Activated naive CD4-positive, alpha-beta T cell treated with anti-CD3 and anti-CD28 coated beads for 36 hours (primary cell): ENCODE measurements at regions of chr1 and their contacts with region 1.

Region 1: GRCh38 chr1:41751804-41752513 is 166.8 kb downstream of the HIVEP3 start:
- DNase-seq: no peak
- H3K4me3 Mint-ChIP-seq: no peak overlapping the region
- H3K27ac Mint-ChIP-seq: peak overlapping the region; percentile 98
- H3K4me1 Mint-ChIP-seq: peaks cover 75% of the 10 kb centered on the region
- H3K27me3 Mint-ChIP-seq: no peaks in the 10 kb centered on the region

Region 2: DNA sequence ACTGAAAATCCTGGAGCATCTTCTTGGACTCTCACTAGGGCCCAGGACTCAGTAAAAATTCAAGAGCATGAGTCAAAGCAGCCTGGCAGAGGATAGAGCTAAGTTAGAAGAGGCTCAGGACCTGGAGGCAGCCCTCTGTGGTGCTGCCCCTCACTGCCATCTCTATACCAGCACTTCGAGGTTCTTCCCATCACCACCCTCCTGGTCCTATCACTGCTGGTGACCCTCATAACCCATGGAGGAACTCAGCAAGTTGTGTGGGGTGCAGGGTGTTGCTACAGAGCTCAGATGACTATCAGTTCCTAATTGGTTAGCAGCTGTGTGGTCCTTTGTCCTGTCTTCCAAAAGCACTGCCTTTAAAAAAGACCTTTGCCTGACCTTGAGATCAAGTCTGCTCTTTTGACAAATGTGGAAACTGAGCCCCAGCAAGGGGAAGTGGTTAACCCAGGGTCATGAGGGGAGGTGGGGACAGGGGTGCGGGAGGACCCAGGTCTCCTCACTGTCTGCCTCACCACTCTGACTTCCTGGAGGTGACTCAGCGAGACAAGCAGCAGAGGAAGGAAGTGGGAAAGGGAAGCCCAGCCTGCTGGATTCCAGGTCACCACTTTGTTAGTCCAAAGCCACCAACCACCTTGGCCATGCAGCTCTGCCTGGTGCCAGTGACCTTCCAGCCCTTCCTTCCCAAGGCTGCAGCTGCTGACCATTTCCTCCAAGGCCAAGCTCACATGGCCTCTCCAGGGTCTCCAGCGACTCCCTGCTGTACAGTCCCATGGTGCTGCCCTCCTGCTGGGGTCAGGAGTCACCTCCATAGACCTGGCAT is 68.1 kb before region 1 on chr1:
- CTCF ChIA-PET with region 1: no interaction called
- intact Hi-C with region 1: loop called (anchors 1 kb)
- DNase-seq: peak; percentile 68
- H3K4me3 Mint-ChIP-seq: no peak overlapping the region
- H3K27ac Mint-ChIP-seq: peak overlapping the region; percentile 65
- H3K4me1 Mint-ChIP-seq: peaks cover 54% of the 10 kb centered on the region
- H3K27me3 Mint-ChIP-seq: no peaks in the 10 kb centered on the region

Region 3: GRCh38 chr1:41739061-41739955 is 12.7 kb before region 1 on chr1:
- CTCF ChIA-PET with region 1: interaction called, 19 read pairs
- intact Hi-C with region 1: loop called (anchors 1 kb)
- DNase-seq: peak; percentile 96
- H3K4me3 Mint-ChIP-seq: peak overlapping the region; percentile 73
- H3K27ac Mint-ChIP-seq: peak overlapping the region; percentile 98
- H3K4me1 Mint-ChIP-seq: peaks cover 93% of the 10 kb centered on the region
- H3K27me3 Mint-ChIP-seq: no peaks in the 10 kb centered on the region

Region 4: GRCh38 chr1:41806472-41807155 is 54.7 kb after region 1 on chr1:
- CTCF ChIA-PET with region 1: no interaction called
- intact Hi-C with region 1: loop called (anchors 2 kb)
- DNase-seq: peak; percentile 71
- H3K4me3 Mint-ChIP-seq: peak overlapping the region; percentile 31
- H3K27ac Mint-ChIP-seq: peak overlapping the region; percentile 86
- H3K4me1 Mint-ChIP-seq: peaks cover 89% of the 10 kb centered on the region
- H3K27me3 Mint-ChIP-seq: no peaks in the 10 kb centered on the region

Region 5: DNA sequence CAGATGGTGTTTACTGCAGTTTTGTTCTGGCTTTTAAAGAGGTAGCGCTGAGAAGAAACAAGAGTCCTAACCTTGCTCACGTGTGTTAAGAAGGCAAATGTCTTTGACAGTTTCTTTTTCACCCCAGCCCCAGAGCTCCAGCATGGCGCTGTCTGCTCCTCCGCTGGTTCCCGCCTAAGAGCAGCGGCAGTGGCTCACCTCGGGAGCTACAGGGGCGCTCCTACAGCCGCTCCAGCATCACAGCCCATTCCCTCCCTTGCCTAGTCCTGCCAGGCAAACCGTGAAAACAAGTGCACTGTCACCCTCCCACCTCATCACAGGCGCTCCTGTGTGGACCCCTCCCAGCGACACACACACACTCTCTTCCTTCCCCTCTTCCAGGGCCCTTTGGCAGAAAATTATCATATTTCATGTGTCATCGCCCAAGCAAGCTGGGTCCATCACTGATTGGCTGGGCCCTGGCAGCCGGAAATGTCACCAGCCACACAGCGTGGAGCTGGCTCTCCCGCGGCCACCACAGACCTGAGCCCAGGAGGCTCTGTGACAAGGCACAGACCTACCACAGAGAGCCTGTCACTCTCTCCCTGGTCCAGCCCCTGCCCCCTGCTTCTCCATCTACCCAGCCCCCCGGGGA is 167.9 kb after region 1 on chr1:
- CTCF ChIA-PET with region 1: interaction called, 3 read pairs
- intact Hi-C with region 1: loop called (anchors 5 kb)
- DNase-seq: peak; percentile 91
- H3K4me3 Mint-ChIP-seq: peak overlapping the region; percentile 89
- H3K27ac Mint-ChIP-seq: peak overlapping the region; percentile 91
- H3K4me1 Mint-ChIP-seq: peaks cover 49% of the 10 kb centered on the region
- H3K27me3 Mint-ChIP-seq: no peaks in the 10 kb centered on the region